Motor neuron (in vitro differentiated cells): ENCODE measurements at regions of chr4 and their contacts with region 1.

Region 1: GRCh38 chr4:15479089-15479912 is 9.6 kb downstream of the CC2D2A start:
- ATAC-seq: peak; percentile 84 to 92 (median 88)
- H3K4me3 ChIP-seq: peak overlapping the region; percentile 8 to 46 (median 24)
- H3K27ac ChIP-seq: peak overlapping the region; percentile 7 to 68
- H3K4me1 ChIP-seq: peaks cover 0 to 4% of the 10 kb centered on the region in 2 donors

Region 2: DNA sequence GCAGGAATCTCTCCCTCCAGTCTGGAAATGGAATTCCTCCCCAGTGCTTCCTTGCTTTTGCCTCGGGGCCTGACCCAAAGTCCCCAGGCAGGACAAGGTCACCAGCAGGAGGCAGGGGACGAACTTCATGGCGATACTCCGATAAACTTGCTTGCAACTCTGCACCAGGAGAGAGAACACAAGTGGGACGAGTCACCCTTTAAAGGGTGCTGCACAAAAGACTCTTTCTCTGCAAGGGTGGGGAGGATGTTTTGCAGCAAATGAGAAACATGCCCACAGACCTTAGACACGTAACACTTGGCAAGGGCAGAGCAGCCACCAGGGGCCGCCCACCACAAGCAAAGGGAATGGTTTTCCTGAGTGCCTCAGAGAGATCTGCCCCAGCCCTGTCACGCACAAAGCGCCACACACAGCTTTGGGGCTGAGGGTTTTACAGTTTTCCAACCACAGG is 483.7 kb after region 1 on chr4 and contains the start of gene FGFBP2:
- in situ Hi-C with region 1: no loop called
- ATAC-seq: peak; percentile 42 to 99 (median 69)
- H3K4me3 ChIP-seq: no peak within 1 kb of the TSS
- H3K27ac ChIP-seq: no peak within 1 kb of the TSS
- H3K4me1 ChIP-seq: no peaks in the 10 kb centered on the region
- total RNA-seq, gene FGFBP2: 0.38 to 7.9 (median 0.71) TPM in 5 of 8 experiments, not detected in the others

Region 3: GRCh38 chr4:15976456-15977447 is 497.5 kb after region 1 on chr4:
- in situ Hi-C with region 1: loop called in 1 of 9 experiments (anchors 25 kb)
- ATAC-seq: peak in 3 of 8 experiments; percentile 89 to 95 (median 89)
- H3K4me3 ChIP-seq: no peak overlapping the region
- H3K27ac ChIP-seq: no peak overlapping the region
- H3K4me1 ChIP-seq: no peaks in the 10 kb centered on the region

Region 4: GRCh38 chr4:16001484-16001858 is 522.2 kb after region 1 on chr4:
- in situ Hi-C with region 1: loop called in 3 of 9 experiments (anchors 25 kb)
- ATAC-seq: peak; percentile 92 to 99 (median 98)
- H3K4me3 ChIP-seq: no peak overlapping the region
- H3K27ac ChIP-seq: no peak overlapping the region
- H3K4me1 ChIP-seq: no peaks in the 10 kb centered on the region